Adrenal gland (tissue), 19 donors: ENCODE measurements at regions of chr5 and their contacts with region 1.

Region 1: DNA sequence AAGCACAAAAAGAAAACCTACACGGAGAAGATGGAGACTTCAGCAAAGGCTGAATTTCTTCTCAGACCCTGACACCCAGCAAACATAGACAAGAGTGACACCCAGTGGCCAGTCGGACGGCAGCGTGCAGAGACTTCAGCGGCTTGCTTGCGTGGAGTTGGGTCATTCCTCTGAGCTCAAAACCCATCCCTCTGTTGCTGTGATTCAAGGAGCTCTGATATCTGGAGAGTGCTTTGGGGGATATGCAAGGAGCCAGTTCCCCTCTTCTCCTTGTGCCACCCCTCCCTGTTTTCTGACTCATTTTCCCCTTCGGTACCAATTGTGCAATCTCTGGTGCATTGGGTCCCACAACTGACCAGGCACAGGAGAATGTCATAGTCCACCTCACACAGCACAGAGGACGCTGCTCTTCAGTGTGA is 27.5 kb downstream of the SH3TC2 start:
- DNase-seq: peak; percentile 66 to 90 (median 76)
- H3K4me3 ChIP-seq: no peak overlapping the region
- H3K27ac ChIP-seq: no peak overlapping the region
- H3K4me1 ChIP-seq: no peaks in the 10 kb centered on the region
- H3K27me3 ChIP-seq: peaks cover 4% of the 10 kb centered on the region
- CTCF ChIP-seq: peak; percentile 68 to 84 (median 76)
- POLR2A ChIP-seq: no peak

Region 2: DNA sequence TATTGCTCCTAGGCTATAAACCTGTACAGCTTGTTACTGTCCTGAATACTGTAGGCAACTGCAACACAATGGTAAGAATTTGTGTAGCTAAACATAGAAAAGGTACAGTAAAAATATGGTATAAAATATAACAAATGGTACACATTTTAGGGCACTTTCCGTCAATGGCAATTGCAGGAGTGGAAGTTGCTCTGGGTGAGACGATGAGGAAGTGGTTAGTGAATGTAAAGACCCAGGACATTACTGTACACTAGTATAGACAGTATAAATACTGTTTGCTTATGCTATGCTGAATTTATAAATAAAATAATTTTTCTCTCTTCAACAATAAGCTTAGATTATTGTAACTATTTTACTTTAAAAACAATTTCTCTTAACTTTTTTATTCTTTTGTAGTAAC is 224.6 kb before region 1 on chr5:
- intact Hi-C with region 1: loop called in 1 of 2 experiments (anchors 10 kb)
- DNase-seq: no peak
- H3K4me3 ChIP-seq: no peak overlapping the region
- H3K27ac ChIP-seq: no peak overlapping the region
- H3K4me1 ChIP-seq: no peaks in the 10 kb centered on the region
- H3K27me3 ChIP-seq: no peaks in the 10 kb centered on the region
- CTCF ChIP-seq: no peak
- POLR2A ChIP-seq: no peak